GM12878 (cell line): ENCODE measurements at regions of chr7 and their contacts with region 1.

Region 1: GRCh38 chr7:89988074-89988473 is 166.2 kb upstream of the STEAP1 start:
- DNase-seq: no peak
- ATAC-seq: no peak
- H3K4me3 ChIP-seq: no peak overlapping the region
- H3K27ac ChIP-seq: no peak overlapping the region
- H3K4me1 ChIP-seq: no peaks in the 10 kb centered on the region
- H3K27me3 ChIP-seq: no peaks in the 10 kb centered on the region
- CTCF ChIP-seq: no peak
- EP300 ChIP-seq: no peak
- POLR2A ChIP-seq: no peak
- RAD21 ChIP-seq: no peak

Region 2: GRCh38 chr7:89934101-89934500 is 54.0 kb before region 1 on chr7:
- CTCF ChIA-PET with region 1: no interaction called
- POLR2A ChIA-PET with region 1: no interaction called
- RAD21 ChIA-PET with region 1: no interaction called
- SMC1A ChIA-PET with region 1: no interaction called
- in situ Hi-C with region 1: no loop called
- intact Hi-C with region 1: loop called (anchors 5 kb)
- DNase-seq: no peak
- ATAC-seq: no peak
- H3K4me3 ChIP-seq: no peak overlapping the region
- H3K27ac ChIP-seq: no peak overlapping the region
- H3K4me1 ChIP-seq: no peaks in the 10 kb centered on the region
- H3K27me3 ChIP-seq: no peaks in the 10 kb centered on the region
- CTCF ChIP-seq: no peak
- EP300 ChIP-seq: no peak
- POLR2A ChIP-seq: no peak
- RAD21 ChIP-seq: no peak

Region 3: DNA sequence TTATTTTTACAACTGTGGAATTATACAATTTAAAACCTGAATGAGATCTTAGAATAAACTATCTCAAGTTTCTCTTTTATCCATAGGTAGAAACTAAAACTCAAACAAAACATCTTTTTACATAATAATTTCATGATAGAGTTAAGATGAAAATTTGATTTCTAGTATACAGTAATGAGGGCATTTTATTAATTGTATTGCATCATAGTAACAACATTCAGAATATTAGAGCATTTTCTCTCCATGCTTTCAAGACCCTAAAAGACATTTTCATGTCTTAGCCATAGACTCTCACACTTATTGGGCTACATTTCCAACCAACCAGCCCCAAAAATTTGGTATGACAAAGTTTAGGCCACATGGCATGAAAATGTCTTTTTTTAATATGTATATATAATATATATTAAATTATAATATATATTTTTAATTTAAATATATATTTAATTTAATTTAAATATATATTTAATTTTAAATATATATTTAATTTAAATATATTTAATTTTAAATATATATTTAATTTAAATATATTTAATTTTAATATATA is 29.5 kb before region 1 on chr7:
- CTCF ChIA-PET with region 1: no interaction called
- POLR2A ChIA-PET with region 1: no interaction called
- RAD21 ChIA-PET with region 1: no interaction called
- SMC1A ChIA-PET with region 1: no interaction called
- in situ Hi-C with region 1: no loop called
- intact Hi-C with region 1: loop called (anchors 5 kb)
- DNase-seq: no peak
- ATAC-seq: no peak
- H3K4me3 ChIP-seq: no peak overlapping the region
- H3K27ac ChIP-seq: no peak overlapping the region
- H3K4me1 ChIP-seq: no peaks in the 10 kb centered on the region
- H3K27me3 ChIP-seq: no peaks in the 10 kb centered on the region
- CTCF ChIP-seq: no peak
- EP300 ChIP-seq: no peak
- POLR2A ChIP-seq: no peak
- RAD21 ChIP-seq: no peak